Mammary epithelial cell (primary cell): ENCODE measurements at regions of chr16 and their contacts with region 1.

Region 1: DNA sequence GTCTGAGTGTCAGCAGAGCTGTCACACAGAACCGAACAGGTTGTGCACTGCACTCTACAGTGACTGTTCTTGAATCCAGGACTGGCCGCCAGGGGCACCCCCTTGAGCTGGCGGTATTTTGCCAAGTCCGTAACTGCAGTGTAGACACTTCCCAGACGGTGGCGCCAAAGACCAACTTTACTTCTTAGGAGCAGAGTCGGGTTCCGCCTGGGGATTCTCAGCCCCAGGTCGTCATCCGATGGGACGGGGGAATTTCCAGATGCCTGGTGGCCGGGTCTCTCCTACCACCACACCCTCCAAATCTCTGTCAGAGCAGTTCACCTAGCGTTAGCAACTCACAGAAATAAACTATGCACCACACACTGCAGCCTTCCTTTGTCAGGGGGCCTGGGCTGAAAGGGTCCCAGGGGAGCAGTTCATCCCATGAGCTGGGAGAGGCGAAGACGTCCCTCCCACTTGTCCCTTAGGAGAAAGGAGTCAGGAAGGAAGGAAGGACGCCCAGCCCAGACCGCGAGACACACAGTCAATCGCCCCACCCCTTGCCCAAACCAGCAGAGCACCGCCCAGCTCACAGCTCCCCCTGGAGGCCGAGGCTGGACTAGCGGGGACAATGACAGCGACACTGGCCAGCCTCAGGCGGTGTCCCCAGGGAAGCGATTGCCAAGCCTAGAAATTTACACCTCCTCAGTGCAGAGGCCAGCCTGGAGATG is 7.4 kb upstream of the RIPOR1 start:
- DNase-seq: peak; percentile 93
- H3K4me3 ChIP-seq: peak overlapping the region; percentile 19 to 60 (median 44)
- H3K27ac ChIP-seq: peak overlapping the region; percentile 76
- H3K4me1 ChIP-seq: peaks cover 27% of the 10 kb centered on the region
- H3K27me3 ChIP-seq: no peaks in the 10 kb centered on the region
- CTCF ChIP-seq: peak; percentile 96 to 98

Region 2: DNA sequence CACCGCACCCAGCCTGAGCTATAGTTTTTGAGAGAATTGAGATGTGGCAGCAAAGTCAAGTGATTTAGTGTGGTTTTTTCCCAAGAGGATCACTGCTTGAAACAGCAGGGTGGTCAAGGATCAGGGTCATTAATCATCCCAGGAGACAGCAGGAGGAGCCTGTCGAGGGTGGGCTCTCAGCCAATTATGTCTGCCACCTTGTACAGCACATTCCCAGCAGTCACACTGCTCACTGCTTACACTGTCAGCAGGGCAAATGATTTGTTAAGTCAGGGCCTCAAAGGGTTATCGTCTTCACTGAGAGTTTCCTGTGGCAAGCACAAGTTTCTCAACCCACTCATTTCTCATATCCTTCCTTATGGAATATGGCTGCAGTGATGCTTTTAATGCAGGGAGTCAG is 383.6 kb before region 1 on chr16:
- CTCF ChIA-PET with region 1: no interaction called
- dilution Hi-C with region 1: no loop called
- in situ Hi-C with region 1: no loop called
- intact Hi-C with region 1: no loop called
- DNase-seq: no peak
- H3K4me3 ChIP-seq: no peak overlapping the region
- H3K27ac ChIP-seq: no peak overlapping the region
- H3K4me1 ChIP-seq: no peaks in the 10 kb centered on the region
- H3K27me3 ChIP-seq: no peaks in the 10 kb centered on the region
- CTCF ChIP-seq: no peak

Region 3: DNA sequence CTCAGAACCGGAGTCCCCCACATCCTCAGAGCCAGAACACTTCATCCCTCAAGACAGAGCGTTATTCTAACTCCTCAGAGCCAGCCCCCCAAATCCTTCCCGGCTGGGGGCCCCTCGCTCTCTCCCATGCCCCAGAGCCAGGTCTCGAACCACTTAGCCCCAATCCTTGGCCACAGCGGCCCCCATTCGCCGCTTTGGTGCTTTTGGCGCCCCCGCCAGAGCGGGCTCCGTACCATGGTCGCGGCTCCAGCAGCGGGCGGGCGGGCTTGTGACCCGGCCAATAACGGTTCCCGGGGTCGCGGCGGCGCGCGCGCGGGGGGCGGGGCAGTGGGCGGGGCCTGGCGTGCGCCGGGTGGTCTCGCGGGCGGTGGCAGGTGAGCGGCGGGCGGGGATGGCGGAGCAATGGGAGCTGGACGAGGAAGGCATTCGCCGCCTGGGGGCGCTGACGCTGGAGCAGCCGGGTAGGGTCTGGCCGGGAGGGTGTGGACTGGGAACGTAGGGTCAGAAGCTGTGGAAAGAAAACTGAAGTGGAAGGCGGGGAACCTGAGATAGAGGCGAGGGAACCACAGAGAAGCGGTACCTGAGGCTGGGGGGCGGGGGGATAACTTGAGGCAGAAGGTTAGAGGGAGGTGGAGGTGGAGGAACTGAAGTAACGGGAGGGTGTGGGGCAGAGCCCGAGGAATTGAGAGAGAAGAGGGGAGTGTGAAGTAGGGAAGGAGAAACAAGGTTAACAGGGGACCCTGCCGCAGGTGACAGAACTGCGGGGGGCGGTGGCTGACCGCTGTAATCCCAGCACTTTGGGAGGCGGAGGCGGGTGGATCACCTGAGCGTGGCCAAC is 194.6 kb before region 1 on chr16 and contains the starts of genes KCTD19 and LRRC36:
- CTCF ChIA-PET with region 1: no interaction called
- dilution Hi-C with region 1: no loop called
- in situ Hi-C with region 1: no loop called
- intact Hi-C with region 1: no loop called
- DNase-seq: no peak
- H3K4me3 ChIP-seq: peak within 1 kb of the TSS in 2 of 3 experiments; percentile 22 to 37
- H3K27ac ChIP-seq: no peak within 1 kb of the TSS
- H3K4me1 ChIP-seq: no peaks in the 10 kb centered on the region
- H3K27me3 ChIP-seq: peaks cover 4% of the 10 kb centered on the region
- CTCF ChIP-seq: peak; percentile 4 to 40
- total RNA-seq, gene KCTD19: not detected
- total RNA-seq, gene LRRC36: not detected

Region 4: DNA sequence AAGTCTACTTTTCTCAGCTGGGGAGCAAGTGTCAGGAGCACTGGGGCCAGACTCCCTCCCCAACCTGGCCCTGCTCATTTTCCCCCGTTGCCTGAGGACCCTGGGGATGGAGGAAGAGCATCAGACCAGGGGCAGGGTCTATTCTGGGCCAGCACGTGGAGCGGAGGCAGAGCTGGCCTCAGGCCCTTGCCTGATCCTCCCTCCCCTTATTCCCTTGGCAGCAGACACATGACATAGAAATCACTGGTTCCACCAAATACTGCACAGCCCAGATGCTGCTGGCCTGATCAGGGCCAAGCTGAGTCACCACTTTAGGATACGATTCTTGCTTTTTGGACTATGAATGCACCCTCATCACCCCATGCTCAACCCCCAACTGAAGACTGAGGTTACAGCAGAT is 22.1 kb before region 1 on chr16:
- CTCF ChIA-PET with region 1: interaction called, 4 read pairs
- dilution Hi-C with region 1: no loop called
- in situ Hi-C with region 1: no loop called
- intact Hi-C with region 1: loop called (anchors 1 kb)
- DNase-seq: no peak
- H3K4me3 ChIP-seq: no peak overlapping the region
- H3K27ac ChIP-seq: no peak overlapping the region
- H3K4me1 ChIP-seq: no peaks in the 10 kb centered on the region
- H3K27me3 ChIP-seq: no peaks in the 10 kb centered on the region
- CTCF ChIP-seq: no peak

Region 5: GRCh38 chr16:67555795-67556212 is 34.6 kb after region 1 on chr16:
- CTCF ChIA-PET with region 1: interaction called, 12 read pairs
- dilution Hi-C with region 1: no loop called
- in situ Hi-C with region 1: no loop called
- intact Hi-C with region 1: no loop called
- DNase-seq: peak; percentile 85
- H3K4me3 ChIP-seq: no peak overlapping the region
- H3K27ac ChIP-seq: peak overlapping the region; percentile 58
- H3K4me1 ChIP-seq: peaks cover 22% of the 10 kb centered on the region
- H3K27me3 ChIP-seq: no peaks in the 10 kb centered on the region
- CTCF ChIP-seq: no peak

Region 6: GRCh38 chr16:67608364-67608763 is 87.1 kb after region 1 on chr16:
- CTCF ChIA-PET with region 1: no interaction called
- dilution Hi-C with region 1: no loop called
- in situ Hi-C with region 1: no loop called
- intact Hi-C with region 1: no loop called
- DNase-seq: no peak
- H3K4me3 ChIP-seq: no peak overlapping the region
- H3K27ac ChIP-seq: no peak overlapping the region
- H3K4me1 ChIP-seq: no peaks in the 10 kb centered on the region
- H3K27me3 ChIP-seq: no peaks in the 10 kb centered on the region
- CTCF ChIP-seq: no peak

Region 7: DNA sequence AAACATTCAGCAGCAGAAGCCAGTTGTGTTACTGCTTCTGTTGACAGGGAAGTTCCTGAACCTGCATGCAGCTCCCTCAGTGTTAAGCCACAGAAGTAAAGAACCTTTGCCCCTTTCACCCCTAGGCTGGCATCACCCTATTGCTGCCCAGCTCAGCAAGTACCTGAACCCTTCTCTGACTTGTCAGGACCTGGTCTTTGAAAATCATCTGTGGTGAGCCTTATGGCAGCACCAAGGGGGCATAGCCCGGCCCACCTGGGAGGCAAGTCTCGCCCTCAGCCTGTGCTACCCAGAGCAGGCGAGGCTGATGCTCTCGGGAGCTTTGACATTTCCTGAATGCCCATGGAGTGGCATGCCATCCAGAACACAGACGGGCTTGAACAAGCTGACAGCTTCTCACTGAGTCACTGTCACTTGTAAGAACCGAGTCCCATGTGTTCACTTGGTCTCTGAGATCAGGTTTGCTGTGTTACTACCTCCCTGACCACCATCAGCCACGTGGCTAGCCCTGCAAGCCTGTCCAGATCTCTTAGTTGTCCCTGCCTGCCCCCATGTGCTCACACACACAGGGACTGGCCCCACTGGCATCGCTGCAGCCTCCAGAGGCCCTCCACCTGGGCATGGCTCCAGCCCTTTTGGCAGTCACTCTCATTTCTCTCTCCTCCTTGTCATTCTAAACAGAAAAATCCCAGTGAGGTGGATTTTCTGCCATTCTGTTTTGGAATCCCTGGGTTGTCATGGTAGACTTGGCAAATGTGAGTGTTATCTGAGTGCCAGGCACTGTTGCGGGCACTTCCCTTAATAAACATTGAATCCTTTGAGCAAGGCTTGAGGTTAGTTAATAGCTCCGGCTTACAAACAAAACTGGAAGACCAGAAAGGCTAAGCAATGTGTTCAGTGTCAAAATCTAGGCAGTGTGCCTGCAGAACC is 120.8 kb after region 1 on chr16:
- CTCF ChIA-PET with region 1: interaction called, 7 read pairs
- dilution Hi-C with region 1: no loop called
- in situ Hi-C with region 1: no loop called
- intact Hi-C with region 1: loop called (anchors 1 kb)
- DNase-seq: peak; percentile 52
- H3K4me3 ChIP-seq: no peak overlapping the region
- H3K27ac ChIP-seq: no peak overlapping the region
- H3K4me1 ChIP-seq: peaks cover 12% of the 10 kb centered on the region
- H3K27me3 ChIP-seq: no peaks in the 10 kb centered on the region
- CTCF ChIP-seq: peak in 1 of 2 donors; percentile 10

Region 8: GRCh38 chr16:67806428-67807147 is 285.3 kb after region 1 on chr16 and contains the starts of genes RANBP10 and TSNAXIP1:
- CTCF ChIA-PET with region 1: no interaction called
- dilution Hi-C with region 1: no loop called
- in situ Hi-C with region 1: loop called in 1 of 2 experiments (anchors 25 kb)
- intact Hi-C with region 1: no loop called
- DNase-seq: peak; percentile 99
- H3K4me3 ChIP-seq: peak within 1 kb of the TSS; percentile 80 to 93 (median 86)
- H3K27ac ChIP-seq: peak within 1 kb of the TSS; percentile 78
- H3K4me1 ChIP-seq: peaks cover 15% of the 10 kb centered on the region
- H3K27me3 ChIP-seq: no peaks in the 10 kb centered on the region
- CTCF ChIP-seq: no peak
- total RNA-seq, gene RANBP10: 5.5 to 15.3 TPM
- total RNA-seq, gene TSNAXIP1: 0.33 to 0.99 TPM

Region 9: GRCh38 chr16:67841764-67842508 is 320.7 kb after region 1 on chr16 and contains the start of gene THAP11:
- CTCF ChIA-PET with region 1: no interaction called
- dilution Hi-C with region 1: no loop called
- in situ Hi-C with region 1: no loop called
- intact Hi-C with region 1: loop called (anchors 10 kb)
- DNase-seq: peak; percentile 90
- H3K4me3 ChIP-seq: peak within 1 kb of the TSS; percentile 60 to 80 (median 74)
- H3K27ac ChIP-seq: peak within 1 kb of the TSS; percentile 77
- H3K4me1 ChIP-seq: peaks cover 34% of the 10 kb centered on the region
- H3K27me3 ChIP-seq: no peaks in the 10 kb centered on the region
- CTCF ChIP-seq: peak; percentile 85 to 89
- total RNA-seq, gene THAP11: 11.7 to 13.1 TPM

Region 10: GRCh38 chr16:67935402-67936123 is 414.3 kb after region 1 on chr16:
- CTCF ChIA-PET with region 1: interaction called, 3 read pairs
- dilution Hi-C with region 1: no loop called
- in situ Hi-C with region 1: loop called in 1 of 2 experiments (anchors 25 kb)
- intact Hi-C with region 1: no loop called
- DNase-seq: peak; percentile 98
- H3K4me3 ChIP-seq: peak overlapping the region; percentile 61 to 88 (median 84)
- H3K27ac ChIP-seq: peak overlapping the region; percentile 57
- H3K4me1 ChIP-seq: peaks cover 18% of the 10 kb centered on the region
- H3K27me3 ChIP-seq: no peaks in the 10 kb centered on the region
- CTCF ChIP-seq: no peak